PC-3 (cell line): ENCODE measurements at regions of chr12 and their contacts with region 1.

Region 1: GRCh38 chr12:15732341-15733061 is 56.7 kb downstream of the EPS8 start:
- DNase-seq: no peak
- ATAC-seq: no peak
- H3K4me3 ChIP-seq: no peak overlapping the region
- H3K27ac ChIP-seq: no peak overlapping the region
- H3K4me1 ChIP-seq: peaks cover 16% of the 10 kb centered on the region
- H3K27me3 ChIP-seq: no peaks in the 10 kb centered on the region
- CTCF ChIP-seq: no peak

Region 2: DNA sequence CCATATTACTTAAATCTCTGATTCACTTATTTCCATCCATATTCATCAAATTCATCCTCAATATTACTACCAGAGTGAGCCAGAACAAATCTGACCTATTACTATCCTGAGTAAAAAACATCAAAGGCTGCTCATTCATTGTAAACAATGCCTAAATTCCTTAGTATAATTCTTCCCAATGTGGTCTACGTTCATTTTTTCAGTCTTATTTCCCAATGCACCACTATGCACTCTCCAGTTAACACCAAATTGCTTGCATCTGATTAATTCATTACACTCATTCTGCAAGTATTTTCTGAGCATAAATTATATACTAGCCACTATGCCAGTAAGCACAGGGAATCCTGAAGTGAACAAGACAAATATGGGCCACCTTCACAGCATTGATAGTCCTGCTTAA is 53.4 kb before region 1 on chr12:
- CTCF ChIA-PET with region 1: no interaction called
- POLR2A ChIA-PET with region 1: no interaction called
- intact Hi-C with region 1: no loop called
- DNase-seq: no peak
- ATAC-seq: no peak
- H3K4me3 ChIP-seq: no peak overlapping the region
- H3K27ac ChIP-seq: no peak overlapping the region
- H3K4me1 ChIP-seq: peaks cover 21% of the 10 kb centered on the region
- H3K27me3 ChIP-seq: no peaks in the 10 kb centered on the region
- CTCF ChIP-seq: no peak

Region 3: GRCh38 chr12:15719230-15719629 is 13.3 kb before region 1 on chr12:
- CTCF ChIA-PET with region 1: no interaction called
- POLR2A ChIA-PET with region 1: interaction called, 26 read pairs
- intact Hi-C with region 1: no loop called
- DNase-seq: peak; percentile 34
- ATAC-seq: peak; percentile 75
- H3K4me3 ChIP-seq: no peak overlapping the region
- H3K27ac ChIP-seq: peak overlapping the region; percentile 85
- H3K4me1 ChIP-seq: peaks cover 40% of the 10 kb centered on the region
- H3K27me3 ChIP-seq: no peaks in the 10 kb centered on the region
- CTCF ChIP-seq: no peak